Mammary epithelial cell (primary cell): ENCODE measurements at regions of chr16 and their contacts with region 1.

Region 1: GRCh38 chr16:79055251-79055970 is 545.1 kb downstream of the MAF start:
- DNase-seq: no peak
- H3K4me3 ChIP-seq: no peak overlapping the region
- H3K27ac ChIP-seq: no peak overlapping the region
- H3K4me1 ChIP-seq: peaks cover 9% of the 10 kb centered on the region
- H3K27me3 ChIP-seq: no peaks in the 10 kb centered on the region
- CTCF ChIP-seq: no peak

Region 2: GRCh38 chr16:78990309-78990701 is 65.1 kb before region 1 on chr16:
- CTCF ChIA-PET with region 1: no interaction called
- dilution Hi-C with region 1: loop called (anchors 5 kb)
- in situ Hi-C with region 1: no loop called
- intact Hi-C with region 1: no loop called
- DNase-seq: no peak
- H3K4me3 ChIP-seq: no peak overlapping the region
- H3K27ac ChIP-seq: no peak overlapping the region
- H3K4me1 ChIP-seq: peaks cover 28% of the 10 kb centered on the region
- H3K27me3 ChIP-seq: no peaks in the 10 kb centered on the region
- CTCF ChIP-seq: no peak